ENCODE measurements at regions of chr2 and their contacts with region 1.

Region 1: GRCh38 chr2:43877782-43878464 is 39.2 kb downstream of the ABCG8 start:
- DNase-seq: peak; percentile 79
- CTCF ChIP-seq: peak; percentile 97

Region 2: GRCh38 chr2:43605079-43605655 is 272.8 kb before region 1 on chr2:
- CTCF ChIA-PET with region 1: no interaction called
- POLR2A ChIA-PET with region 1: no interaction called
- DNase-seq: peak; percentile 22
- CTCF ChIP-seq: peak; percentile 62

Region 3: GRCh38 chr2:43823751-43824150 is 54.2 kb before region 1 on chr2:
- CTCF ChIA-PET with region 1: no interaction called
- POLR2A ChIA-PET with region 1: no interaction called
- DNase-seq: no peak
- CTCF ChIP-seq: no peak

Region 4: GRCh38 chr2:43890855-43891254 is 12.9 kb after region 1 on chr2:
- CTCF ChIA-PET with region 1: interaction called, 12 read pairs
- POLR2A ChIA-PET with region 1: no interaction called
- DNase-seq: no peak
- CTCF ChIP-seq: no peak

Region 5: GRCh38 chr2:43905371-43905803 is 27.5 kb after region 1 on chr2:
- CTCF ChIA-PET with region 1: interaction called, 18 read pairs
- POLR2A ChIA-PET with region 1: no interaction called
- DNase-seq: peak; percentile 18
- CTCF ChIP-seq: no peak

Measured in GM10248 (cell line).